Panc1 (cell line): ENCODE measurements at regions of chr12 and their contacts with region 1.

Region 1: GRCh38 chr12:95326445-95326844 is 108.8 kb downstream of the VEZT start:
- DNase-seq: no peak
- ATAC-seq: no peak
- H3K4me3 ChIP-seq: no peak overlapping the region
- H3K27ac ChIP-seq: no peak overlapping the region
- H3K4me1 ChIP-seq: peaks cover 8% of the 10 kb centered on the region; the same call in 1 of the 2 replicates
- H3K27me3 ChIP-seq: no peaks in the 10 kb centered on the region
- CTCF ChIP-seq: no peak

Region 2: DNA sequence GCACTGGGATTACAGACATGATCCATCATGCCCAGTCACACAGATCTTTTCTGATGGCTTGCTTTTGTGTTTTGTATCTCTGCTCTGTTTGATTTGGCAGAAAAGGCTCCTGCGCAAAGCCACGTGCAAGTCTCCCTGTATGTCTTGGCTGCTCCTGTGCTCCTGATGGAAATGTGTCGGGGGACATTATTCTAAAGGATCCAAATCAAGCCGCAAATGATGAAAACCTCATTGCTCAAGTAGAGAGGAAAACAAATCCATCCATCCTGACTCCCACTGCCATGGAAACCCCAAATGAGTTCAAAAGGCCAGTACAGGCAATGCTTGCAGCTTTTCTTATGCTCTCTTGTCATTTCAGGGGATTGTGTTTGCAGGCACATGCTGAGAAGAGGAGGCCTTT is 416.8 kb before region 1 on chr12:
- CTCF ChIA-PET with region 1: interaction called, 11 read pairs
- POLR2A ChIA-PET with region 1: no interaction called
- in situ Hi-C with region 1: no loop called
- intact Hi-C with region 1: no loop called
- DNase-seq: no peak
- ATAC-seq: no peak
- H3K4me3 ChIP-seq: no peak overlapping the region
- H3K27ac ChIP-seq: no peak overlapping the region
- H3K4me1 ChIP-seq: no peaks in the 10 kb centered on the region
- H3K27me3 ChIP-seq: no peaks in the 10 kb centered on the region
- CTCF ChIP-seq: no peak

Region 3: GRCh38 chr12:95351748-95352147 is 25.3 kb after region 1 on chr12:
- CTCF ChIA-PET with region 1: no interaction called
- POLR2A ChIA-PET with region 1: interaction called, 13 read pairs
- in situ Hi-C with region 1: no loop called
- intact Hi-C with region 1: no loop called
- DNase-seq: no peak
- ATAC-seq: no peak
- H3K4me3 ChIP-seq: no peak overlapping the region
- H3K27ac ChIP-seq: no peak overlapping the region
- H3K4me1 ChIP-seq: no peaks in the 10 kb centered on the region
- H3K27me3 ChIP-seq: no peaks in the 10 kb centered on the region; the same call in 1 of the 2 replicates
- CTCF ChIP-seq: no peak

Region 4: DNA sequence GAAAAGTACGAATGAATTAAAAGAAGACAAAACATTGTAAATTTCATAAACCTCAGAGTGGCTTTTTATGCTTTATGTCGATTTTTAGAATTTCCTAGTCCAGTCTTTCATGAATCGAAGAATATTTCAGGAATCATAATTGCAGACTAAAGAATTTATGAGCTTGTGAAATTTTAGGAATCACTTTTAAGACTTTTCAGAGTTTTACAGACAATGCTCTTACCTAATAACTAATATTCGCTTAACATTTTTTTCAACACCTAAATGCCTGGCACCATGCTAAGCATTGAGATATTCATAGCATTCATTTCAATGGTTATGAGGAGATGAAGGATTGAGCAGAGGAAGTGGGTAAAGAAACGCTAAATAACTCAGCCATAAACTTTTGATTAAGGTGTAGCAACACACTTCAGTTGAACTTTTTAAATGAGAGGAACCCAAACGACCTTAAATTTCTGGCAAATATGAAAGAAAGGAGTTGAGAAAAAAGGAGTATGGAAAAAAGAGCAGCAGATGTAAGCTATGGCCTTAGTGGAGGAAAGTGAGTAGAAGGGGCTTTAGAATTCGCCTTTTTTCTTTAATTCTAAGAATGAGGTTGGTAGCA is 225.6 kb after region 1 on chr12:
- CTCF ChIA-PET with region 1: no interaction called
- POLR2A ChIA-PET with region 1: interaction called, 14 read pairs
- in situ Hi-C with region 1: no loop called
- intact Hi-C with region 1: no loop called
- DNase-seq: no peak
- ATAC-seq: no peak
- H3K4me3 ChIP-seq: no peak overlapping the region
- H3K27ac ChIP-seq: no peak overlapping the region
- H3K4me1 ChIP-seq: no peaks in the 10 kb centered on the region
- H3K27me3 ChIP-seq: peaks cover 8% of the 10 kb centered on the region; the same call in 1 of the 2 replicates
- CTCF ChIP-seq: no peak

Region 5: GRCh38 chr12:95683418-95683817 is 357.0 kb after region 1 on chr12:
- CTCF ChIA-PET with region 1: no interaction called
- POLR2A ChIA-PET with region 1: no interaction called
- in situ Hi-C with region 1: no loop called
- intact Hi-C with region 1: no loop called
- DNase-seq: no peak
- ATAC-seq: no peak
- H3K4me3 ChIP-seq: no peak overlapping the region
- H3K27ac ChIP-seq: no peak overlapping the region
- H3K4me1 ChIP-seq: no peaks in the 10 kb centered on the region
- H3K27me3 ChIP-seq: no peaks in the 10 kb centered on the region
- CTCF ChIP-seq: no peak